B cell (primary cell): ENCODE measurements at regions of chr10 and their contacts with region 1.

Region 1: GRCh38 chr10:79098596-79099015 is 29.8 kb downstream of the ZMIZ1 start:
- DNase-seq: peak; percentile 84
- ATAC-seq: peak; percentile 81
- H3K4me3 ChIP-seq: no peak overlapping the region
- H3K4me3 Mint-ChIP-seq: no peak overlapping the region
- H3K27ac ChIP-seq: no peak overlapping the region
- H3K27ac Mint-ChIP-seq: no peak overlapping the region
- H3K4me1 ChIP-seq: peaks cover 44 to 53% of the 10 kb centered on the region in 2 donors
- H3K4me1 Mint-ChIP-seq: peaks cover 50% of the 10 kb centered on the region
- H3K27me3 ChIP-seq: peaks cover 0 to 50% (median 15%) of the 10 kb centered on the region in 4 experiments
- H3K27me3 Mint-ChIP-seq: peaks cover 35% of the 10 kb centered on the region
- CTCF ChIP-seq: no peak

Region 2: DNA sequence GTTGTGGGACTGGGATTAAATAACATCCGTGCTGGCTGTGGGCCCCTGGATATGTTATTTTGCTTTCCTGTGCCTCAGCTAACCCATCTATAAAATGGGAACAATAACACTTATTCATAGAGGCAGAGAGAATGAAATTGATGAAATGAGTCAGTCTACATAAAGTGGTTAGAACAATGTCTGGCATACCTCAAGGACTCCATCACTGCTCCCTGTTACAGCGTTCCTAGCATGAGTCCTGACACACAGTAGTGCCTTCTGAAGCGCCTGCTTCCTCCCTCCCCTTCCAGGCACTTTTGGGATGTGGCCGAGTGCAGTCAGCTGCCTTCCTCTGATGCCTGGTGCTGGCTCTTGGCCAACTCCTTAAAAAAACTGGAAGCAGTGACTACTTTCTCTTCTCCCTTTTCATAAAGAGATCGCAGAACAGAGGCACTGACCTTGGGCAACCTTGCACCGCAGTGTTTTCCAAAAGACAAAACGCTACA is 138.2 kb before region 1 on chr10:
- CTCF ChIA-PET with region 1: no interaction called
- POLR2A ChIA-PET with region 1: no interaction called
- intact Hi-C with region 1: no loop called
- DNase-seq: no peak
- ATAC-seq: no peak
- H3K4me3 ChIP-seq: no peak overlapping the region
- H3K4me3 Mint-ChIP-seq: no peak overlapping the region
- H3K27ac ChIP-seq: no peak overlapping the region
- H3K27ac Mint-ChIP-seq: no peak overlapping the region
- H3K4me1 ChIP-seq: no peaks in the 10 kb centered on the region
- H3K4me1 Mint-ChIP-seq: no peaks in the 10 kb centered on the region
- H3K27me3 ChIP-seq: peaks cover 0 to 14% (median 0%) of the 10 kb centered on the region in 4 experiments
- H3K27me3 Mint-ChIP-seq: peaks cover 29% of the 10 kb centered on the region
- CTCF ChIP-seq: no peak

Region 3: DNA sequence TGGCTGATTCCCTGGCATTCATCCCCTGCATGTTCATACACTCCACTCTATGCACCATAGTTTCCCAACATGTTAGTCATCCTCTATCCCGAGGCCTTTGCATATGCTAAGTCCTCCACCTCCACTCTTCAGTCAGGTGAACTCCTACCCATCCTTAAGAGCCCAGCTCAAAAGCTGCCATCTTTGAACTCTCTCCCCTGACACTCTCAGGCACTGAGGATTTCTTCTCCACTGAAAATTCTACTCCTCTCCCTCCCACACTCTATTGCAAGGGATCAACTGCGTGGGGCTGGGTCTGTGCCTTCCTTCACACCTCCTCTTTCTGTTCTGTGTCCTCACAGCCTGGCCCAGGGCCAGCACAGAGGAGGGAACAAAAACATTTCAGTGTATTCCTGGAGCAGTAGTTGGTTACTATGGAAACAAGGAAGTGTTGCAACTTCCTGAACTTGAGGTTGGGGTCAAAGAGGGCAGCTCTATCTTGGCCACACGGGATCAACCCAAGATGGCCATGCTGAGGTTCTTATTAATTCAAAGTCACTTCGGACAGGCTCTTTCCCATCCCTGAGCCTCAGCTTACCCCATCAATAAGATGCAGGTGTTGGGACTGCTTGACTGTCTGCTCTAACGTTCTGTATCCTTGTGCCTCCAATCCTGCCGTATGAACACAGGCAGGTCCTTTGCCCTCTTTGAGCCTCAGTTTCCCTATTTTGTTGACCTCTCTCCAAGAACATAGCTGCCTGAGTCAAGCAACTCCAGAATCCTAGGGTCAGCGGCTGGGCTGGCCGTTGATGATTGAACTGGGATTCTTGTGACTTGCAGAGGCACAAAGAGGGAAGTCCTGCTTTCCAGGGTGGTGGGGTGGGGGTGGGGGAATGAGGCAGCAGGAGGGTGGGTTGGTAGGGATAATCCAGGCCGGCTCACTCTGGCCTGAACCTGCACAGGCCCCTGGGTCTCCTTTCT is 14.3 kb before region 1 on chr10:
- CTCF ChIA-PET with region 1: interaction called, 3 read pairs
- POLR2A ChIA-PET with region 1: no interaction called
- intact Hi-C with region 1: loop called (anchors 1 kb)
- DNase-seq: peak; percentile 62
- ATAC-seq: peak; percentile 11
- H3K4me3 ChIP-seq: peak overlapping the region in 2 of 5 experiments; percentile 8 to 38
- H3K4me3 Mint-ChIP-seq: peak overlapping the region; percentile 87
- H3K27ac ChIP-seq: no peak overlapping the region
- H3K27ac Mint-ChIP-seq: peak overlapping the region; percentile 64
- H3K4me1 ChIP-seq: peaks cover 35 to 50% of the 10 kb centered on the region in 2 donors
- H3K4me1 Mint-ChIP-seq: peaks cover 44% of the 10 kb centered on the region
- H3K27me3 ChIP-seq: peaks cover 0 to 34% (median 12%) of the 10 kb centered on the region in 4 experiments
- H3K27me3 Mint-ChIP-seq: peaks cover 37% of the 10 kb centered on the region
- CTCF ChIP-seq: no peak